ENCODE measurements at regions of chr9 and their contacts with region 1.

Region 1: DNA sequence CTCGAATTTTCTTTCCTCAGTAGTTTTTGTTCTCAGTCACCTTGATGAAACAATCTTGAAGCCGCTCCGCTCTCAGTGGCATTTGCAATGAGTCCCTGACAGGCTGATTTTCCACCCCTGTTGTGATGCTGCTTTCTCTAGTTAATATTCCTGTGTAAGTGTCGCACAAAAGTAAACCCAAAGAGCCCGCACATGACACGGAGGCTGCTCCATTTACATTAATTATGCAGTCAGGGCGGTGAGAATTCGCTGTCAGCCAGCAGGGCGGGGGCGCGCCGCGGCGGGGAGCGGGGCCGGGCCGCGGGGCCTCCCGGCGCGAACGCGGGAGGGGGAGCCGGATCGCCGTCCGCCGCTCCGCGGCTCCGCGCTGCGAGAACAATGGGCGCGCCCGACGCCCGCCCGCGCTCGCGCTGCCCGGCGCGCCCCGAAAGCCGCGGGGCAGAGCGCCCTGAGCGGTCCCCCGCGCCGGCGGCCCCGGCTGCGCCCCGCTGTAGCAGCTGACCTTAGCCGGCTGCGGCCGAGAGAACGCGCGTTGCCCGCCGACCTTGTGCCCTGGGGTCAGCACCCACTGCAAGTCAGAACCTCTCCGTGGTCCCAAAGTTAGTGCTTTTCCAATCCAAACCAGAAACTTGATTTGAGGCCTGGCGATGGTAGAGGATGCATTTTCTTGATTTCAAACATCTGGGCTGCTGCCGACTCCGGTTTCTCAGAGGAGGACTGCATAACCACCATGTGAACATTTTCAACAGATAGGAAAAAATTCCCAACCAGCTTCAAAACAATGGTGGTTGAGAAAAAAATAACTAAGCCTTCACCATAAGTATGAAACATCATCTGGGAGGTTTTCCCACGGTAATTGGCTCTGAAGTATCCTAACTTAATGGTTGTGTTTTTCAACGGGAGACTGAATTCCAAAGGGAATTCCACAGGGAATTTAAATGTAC is 142.6 kb downstream of the PBX3 start:
- DNase-seq: peak; percentile 73

Region 2: DNA sequence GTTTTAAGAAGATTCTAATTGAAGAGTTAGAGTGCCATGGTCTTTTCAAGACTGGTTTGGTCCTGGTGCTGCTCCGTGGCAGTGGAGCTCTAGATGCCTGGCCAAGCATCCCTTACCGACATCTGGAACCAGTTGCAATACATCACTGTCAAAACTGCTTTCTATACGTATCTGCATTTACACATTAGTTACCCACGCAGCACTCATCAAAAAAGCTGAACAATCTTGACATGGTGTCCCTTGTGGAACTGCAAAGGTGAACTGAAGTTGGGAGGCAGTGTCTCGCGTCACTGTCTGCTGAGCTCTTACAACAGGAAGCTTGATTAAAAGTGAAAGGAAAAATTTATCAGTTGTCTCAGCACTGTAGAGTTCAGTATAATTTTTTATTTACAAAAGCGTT is 60.0 kb before region 1 on chr9:
- intact Hi-C with region 1: loop called (anchors 10 kb)
- DNase-seq: peak; percentile 78